ENCODE measurements at regions of chr2 and their contacts with region 1.

Region 1: DNA sequence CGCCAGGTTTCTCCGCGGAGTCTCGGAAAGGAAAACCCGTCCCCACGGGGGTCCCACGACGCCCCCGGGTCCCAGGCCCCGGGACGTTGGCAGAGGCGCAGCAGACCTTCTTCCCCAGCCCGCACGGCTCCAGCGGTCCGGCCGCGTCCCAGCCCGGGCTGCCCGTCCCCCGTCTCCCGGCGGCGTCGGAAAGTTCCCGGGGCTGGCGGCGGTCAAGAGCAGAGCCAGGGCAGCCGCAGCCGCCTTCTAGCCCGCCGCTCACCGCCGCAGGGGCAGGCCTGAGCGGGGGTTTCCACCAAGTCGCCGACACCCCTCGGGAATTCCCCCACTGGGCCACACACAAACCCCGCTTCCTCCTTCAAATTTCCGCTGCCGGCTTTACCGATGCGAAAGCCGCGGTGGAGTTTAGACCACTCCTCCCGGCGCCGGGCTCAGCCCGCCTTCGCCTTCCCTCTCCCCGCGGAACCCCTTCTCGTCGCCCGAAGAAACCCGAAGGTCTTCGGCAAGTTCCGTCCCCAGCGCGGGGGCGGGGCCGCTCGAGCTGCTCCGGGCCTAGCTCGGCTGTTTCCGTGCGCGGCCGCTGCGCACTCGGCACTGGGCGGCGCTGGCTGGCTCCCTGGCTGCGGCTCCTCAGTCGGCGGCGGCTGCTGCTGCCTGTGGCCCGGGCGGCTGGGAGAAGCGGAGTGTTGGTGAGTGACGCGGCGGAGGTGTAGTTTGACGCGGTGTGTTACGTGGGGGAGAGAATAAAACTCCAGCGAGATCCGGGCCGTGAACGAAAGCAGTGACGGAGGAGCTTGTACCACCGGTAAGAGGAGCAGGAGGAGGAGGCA is at the start of gene CREB1:
- DNase-seq: peak; percentile 100
- H3K4me3 Mint-ChIP-seq: peak within 1 kb of the TSS; percentile 99
- H3K27ac Mint-ChIP-seq: peak within 1 kb of the TSS; percentile 100
- H3K4me1 Mint-ChIP-seq: peaks cover 49% of the 10 kb centered on the region
- H3K27me3 Mint-ChIP-seq: no peaks in the 10 kb centered on the region
- total RNA-seq, gene CREB1: 115 and 136 TPM in 2 replicates

Region 2: GRCh38 chr2:206159346-206160124 is 1370.0 kb before region 1 on chr2 and contains the starts of genes EEF1B2 and NDUFS1:
- intact Hi-C with region 1: loop called (anchors 10 kb)
- DNase-seq: peak; percentile 96
- H3K4me3 Mint-ChIP-seq: peak within 1 kb of the TSS; percentile 98
- H3K27ac Mint-ChIP-seq: peak within 1 kb of the TSS; percentile 98
- H3K4me1 Mint-ChIP-seq: peaks cover 36% of the 10 kb centered on the region
- H3K27me3 Mint-ChIP-seq: no peaks in the 10 kb centered on the region
- total RNA-seq, gene EEF1B2: 719 and 724 TPM in 2 replicates
- total RNA-seq, gene NDUFS1: 80.7 and 84.3 TPM in 2 replicates

Region 3: DNA sequence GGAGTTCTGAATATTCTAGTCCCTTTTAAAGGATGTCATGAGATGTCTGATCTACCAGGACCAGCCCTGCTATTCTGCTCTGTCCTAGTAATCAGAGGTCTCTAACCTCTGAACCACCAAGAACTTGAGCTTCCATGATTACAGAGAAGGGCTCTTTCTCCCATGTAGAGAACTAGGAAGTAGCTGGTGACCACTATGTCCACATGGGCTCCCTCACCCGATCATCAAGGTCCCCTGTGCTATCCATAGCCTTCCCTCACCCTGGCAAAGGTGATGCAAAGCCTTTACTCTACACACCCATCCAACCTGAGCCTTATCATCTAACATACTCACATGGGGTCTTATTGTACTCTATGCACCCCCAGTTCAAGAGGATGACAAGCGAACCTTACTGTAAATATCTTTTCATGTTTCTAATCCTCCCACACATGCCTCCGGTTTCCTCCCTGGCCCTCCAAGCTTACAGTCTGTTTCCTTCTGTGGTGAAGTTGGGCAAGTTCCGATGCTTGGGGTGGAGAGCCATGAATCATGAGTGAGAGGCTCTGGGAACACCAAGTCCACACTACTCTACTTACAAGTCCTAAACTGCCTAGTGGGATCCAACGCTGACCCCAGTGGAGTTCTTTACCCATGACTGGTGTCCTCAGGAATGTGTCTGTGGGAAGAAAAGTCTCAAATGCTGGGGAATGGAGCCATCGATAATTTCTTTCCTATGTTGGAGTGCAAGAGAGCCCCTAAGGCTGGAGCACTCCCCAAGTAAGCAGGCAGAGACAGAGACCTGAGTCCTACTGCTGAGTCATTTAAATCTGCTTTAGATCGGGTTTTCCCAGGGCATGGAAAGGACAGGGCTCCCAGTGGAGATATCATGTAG is 290.5 kb before region 1 on chr2:
- intact Hi-C with region 1: loop called (anchors 5 kb)
- DNase-seq: no peak
- H3K4me3 Mint-ChIP-seq: peak overlapping the region; percentile 64
- H3K27ac Mint-ChIP-seq: peak overlapping the region; percentile 84
- H3K4me1 Mint-ChIP-seq: peaks cover 29% of the 10 kb centered on the region
- H3K27me3 Mint-ChIP-seq: no peaks in the 10 kb centered on the region

Region 4: DNA sequence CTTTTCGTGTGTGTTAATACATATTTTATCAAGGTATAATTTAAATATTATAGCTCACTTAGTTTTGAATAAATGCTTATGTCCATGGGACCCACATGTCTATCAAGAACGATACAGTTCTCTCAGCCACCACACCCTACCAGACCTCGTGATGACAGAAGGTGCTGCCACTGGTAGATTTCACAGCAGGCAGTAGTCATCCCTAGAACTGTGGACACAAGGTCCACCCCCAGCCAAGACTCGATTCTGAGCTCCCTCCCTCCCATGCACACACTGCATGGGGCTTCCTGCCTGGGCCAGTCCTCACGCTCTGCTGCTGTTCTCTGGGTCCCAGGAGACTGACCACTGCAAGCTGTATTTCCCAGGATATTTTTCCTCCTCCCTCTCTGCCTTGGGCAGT is 26.3 kb before region 1 on chr2:
- intact Hi-C with region 1: loop called (anchors 1 kb)
- DNase-seq: no peak
- H3K4me3 Mint-ChIP-seq: no peak overlapping the region
- H3K27ac Mint-ChIP-seq: no peak overlapping the region
- H3K4me1 Mint-ChIP-seq: peaks cover 67% of the 10 kb centered on the region
- H3K27me3 Mint-ChIP-seq: no peaks in the 10 kb centered on the region

Region 5: DNA sequence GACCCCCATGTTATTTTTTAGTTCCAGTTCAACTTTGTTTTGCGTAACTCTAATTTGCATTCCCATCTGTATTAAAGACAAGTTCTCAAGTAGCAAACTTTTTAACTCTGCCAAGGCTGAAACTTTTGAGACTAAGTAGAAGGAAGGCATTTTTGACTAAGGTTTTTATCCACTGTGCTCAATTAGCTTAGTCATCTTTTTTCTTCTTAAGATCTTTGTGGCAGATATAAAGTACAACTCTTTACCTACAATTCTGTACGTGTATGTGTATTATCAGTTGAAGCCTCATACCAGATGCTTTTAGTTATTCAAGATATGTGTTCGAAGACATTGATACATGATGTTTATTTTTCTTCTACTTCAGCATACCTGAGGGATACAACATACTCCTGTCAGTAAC is 41.8 kb after region 1 on chr2:
- intact Hi-C with region 1: loop called (anchors 5 kb)
- DNase-seq: no peak
- H3K4me3 Mint-ChIP-seq: no peak overlapping the region
- H3K27ac Mint-ChIP-seq: peak overlapping the region; percentile 46
- H3K4me1 Mint-ChIP-seq: peaks cover 20% of the 10 kb centered on the region
- H3K27me3 Mint-ChIP-seq: no peaks in the 10 kb centered on the region

Region 6: DNA sequence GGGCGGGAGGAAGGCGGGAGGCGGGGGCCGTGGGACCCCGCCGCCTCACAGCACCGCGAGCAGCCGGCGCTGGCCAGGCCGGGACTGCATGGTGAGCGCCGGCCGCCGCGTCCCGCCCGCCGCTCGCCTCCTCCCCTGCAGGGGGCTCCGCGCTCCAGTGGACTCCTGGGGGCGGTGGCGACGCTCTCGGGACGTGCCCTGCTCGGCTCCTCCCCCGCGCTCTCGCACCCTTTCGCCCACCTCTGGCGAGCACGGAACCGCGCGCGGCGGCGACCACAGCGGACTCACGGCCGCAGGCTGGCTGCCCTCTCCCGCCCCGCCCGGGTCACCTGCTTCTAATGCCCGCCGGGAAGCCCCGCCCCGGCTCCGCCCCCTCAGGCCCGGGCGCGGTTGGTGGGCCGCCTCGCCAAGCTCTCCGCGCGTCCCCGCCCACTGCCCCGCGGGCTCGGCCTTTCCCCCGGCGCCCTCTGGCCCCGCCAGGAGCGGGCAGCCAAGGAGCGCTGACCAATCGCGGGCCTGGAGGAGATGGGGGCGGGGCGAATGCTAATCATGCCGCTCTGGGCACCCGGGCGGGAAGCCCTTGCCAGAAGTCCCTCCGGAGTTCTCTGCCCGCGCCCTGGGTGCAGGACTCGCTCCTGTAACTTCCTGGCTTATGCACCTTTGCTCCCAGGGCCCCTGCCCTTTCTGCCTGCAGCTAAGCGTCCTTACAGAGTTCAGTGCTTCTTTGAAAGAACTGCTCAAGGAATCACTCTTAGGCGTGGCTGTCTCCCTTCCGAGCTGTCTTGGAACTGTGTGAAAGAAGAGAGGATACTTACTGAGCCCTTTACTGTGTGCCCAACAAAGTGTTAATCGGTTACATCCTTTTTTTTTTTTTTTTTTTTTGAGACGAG is 240.3 kb after region 1 on chr2 and contains the start of gene FZD5:
- intact Hi-C with region 1: loop called (anchors 2 kb)
- DNase-seq: peak; percentile 76
- H3K4me3 Mint-ChIP-seq: peak within 1 kb of the TSS; percentile 83
- H3K27ac Mint-ChIP-seq: peak within 1 kb of the TSS; percentile 46
- H3K4me1 Mint-ChIP-seq: peaks cover 23% of the 10 kb centered on the region
- H3K27me3 Mint-ChIP-seq: peaks cover 58% of the 10 kb centered on the region
- total RNA-seq, gene FZD5: 1.7 TPM in 2 replicates